Activated naive CD4-positive, alpha-beta T cell treated with anti-CD3 and anti-CD28 coated beads for 36 hours (primary cell): ENCODE measurements at regions of chr5 and their contacts with region 1.

Region 1: GRCh38 chr5:57499262-57500050 is 16.8 kb upstream of the ACTBL2 start:
- DNase-seq: peak; percentile 31
- H3K4me3 Mint-ChIP-seq: peak overlapping the region; percentile 51
- H3K27ac Mint-ChIP-seq: no peak overlapping the region
- H3K4me1 Mint-ChIP-seq: peaks cover 19% of the 10 kb centered on the region
- H3K27me3 Mint-ChIP-seq: no peaks in the 10 kb centered on the region

Region 2: GRCh38 chr5:56909294-56910209 is 589.9 kb before region 1 on chr5 and contains the start of gene SETD9:
- CTCF ChIA-PET with region 1: no interaction called
- intact Hi-C with region 1: loop called (anchors 10 kb)
- DNase-seq: peak; percentile 97
- H3K4me3 Mint-ChIP-seq: peak within 1 kb of the TSS; percentile 81
- H3K27ac Mint-ChIP-seq: peak within 1 kb of the TSS; percentile 94
- H3K4me1 Mint-ChIP-seq: peaks cover 19% of the 10 kb centered on the region
- H3K27me3 Mint-ChIP-seq: no peaks in the 10 kb centered on the region
- total RNA-seq, gene SETD9: 5.8 to 8.6 TPM

Region 3: DNA sequence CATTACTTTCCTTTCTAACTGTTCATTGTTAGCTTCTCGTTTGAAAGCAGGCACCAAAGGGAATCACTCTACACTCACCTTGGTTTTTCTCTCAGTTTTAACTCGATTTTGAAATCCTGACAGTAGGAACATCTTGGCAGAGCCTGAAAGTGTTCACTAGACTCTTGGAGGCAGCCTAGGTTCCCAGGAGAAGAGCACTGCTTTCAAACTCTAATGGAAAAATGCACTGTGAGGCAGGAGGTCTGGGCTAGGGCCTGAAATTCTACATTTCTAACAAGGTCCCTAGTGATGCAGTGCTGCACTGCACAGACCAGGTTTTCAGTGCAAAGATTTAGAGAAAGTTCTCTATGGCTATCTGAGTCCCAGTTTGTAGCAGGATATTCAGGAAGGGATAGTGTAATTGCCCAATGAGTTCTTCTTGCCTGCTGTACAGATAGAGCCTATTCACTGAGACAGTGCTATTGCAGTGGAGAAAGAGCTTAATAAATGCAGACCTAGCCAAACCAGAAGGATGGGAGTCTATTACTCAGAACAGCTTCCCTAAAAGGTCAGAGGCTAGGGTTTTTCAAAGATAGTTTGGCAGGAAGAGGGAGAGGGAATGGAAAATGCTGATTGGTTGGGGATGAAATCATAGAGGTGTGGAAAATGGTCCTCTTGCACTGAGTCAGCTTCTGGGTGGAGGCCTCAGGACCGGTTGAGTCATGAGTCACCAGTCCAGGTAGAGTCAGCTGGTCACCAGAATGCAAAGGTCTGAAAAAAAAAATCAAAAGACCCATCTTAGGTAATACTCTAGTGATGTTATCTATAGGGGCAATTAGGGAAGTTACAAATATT is 171.7 kb before region 1 on chr5:
- CTCF ChIA-PET with region 1: no interaction called
- intact Hi-C with region 1: loop called (anchors 5 kb)
- DNase-seq: peak; percentile 6
- H3K4me3 Mint-ChIP-seq: no peak overlapping the region
- H3K27ac Mint-ChIP-seq: no peak overlapping the region
- H3K4me1 Mint-ChIP-seq: peaks cover 23% of the 10 kb centered on the region
- H3K27me3 Mint-ChIP-seq: no peaks in the 10 kb centered on the region

Region 4: GRCh38 chr5:57338068-57338892 is 161.2 kb before region 1 on chr5:
- CTCF ChIA-PET with region 1: no interaction called
- intact Hi-C with region 1: loop called (anchors 5 kb)
- DNase-seq: peak; percentile 31
- H3K4me3 Mint-ChIP-seq: no peak overlapping the region
- H3K27ac Mint-ChIP-seq: no peak overlapping the region
- H3K4me1 Mint-ChIP-seq: no peaks in the 10 kb centered on the region
- H3K27me3 Mint-ChIP-seq: peaks cover under 1% of the 10 kb centered on the region

Region 5: DNA sequence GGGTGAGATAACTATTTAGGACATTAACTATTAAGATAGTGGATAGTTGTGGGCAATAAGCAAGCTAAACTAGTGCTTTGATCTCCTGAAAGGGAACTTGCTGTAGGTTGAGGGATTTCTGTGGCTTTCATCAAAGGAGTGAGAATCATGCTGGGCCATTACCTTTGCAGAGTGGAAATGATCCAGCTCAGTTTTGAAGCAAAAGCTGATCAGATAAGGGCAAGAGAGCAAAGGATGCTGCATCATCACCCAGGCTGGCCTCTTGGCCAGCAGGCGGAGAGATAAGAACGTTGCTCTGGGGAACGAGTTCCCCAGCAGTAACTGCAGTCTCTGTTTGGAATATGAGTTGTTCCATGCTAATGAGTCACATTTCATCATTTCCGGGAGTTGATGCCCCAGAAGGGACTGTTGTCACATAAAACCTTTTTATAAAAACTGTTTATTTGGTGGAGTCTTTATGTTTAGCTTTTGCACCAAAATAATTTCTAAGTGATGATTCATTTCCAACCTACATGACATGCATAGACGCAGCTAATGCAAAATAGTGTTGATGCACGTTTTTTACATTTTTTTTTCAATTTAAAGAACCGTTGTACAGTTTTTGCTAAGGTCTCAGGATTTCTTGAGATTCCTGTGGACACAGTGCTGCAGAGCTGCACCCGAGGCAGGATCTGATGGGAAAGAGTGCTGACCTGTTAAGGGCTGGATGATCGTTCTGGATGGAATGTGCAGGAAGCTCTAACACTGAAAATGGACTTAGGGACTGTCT is 116.2 kb before region 1 on chr5:
- CTCF ChIA-PET with region 1: no interaction called
- intact Hi-C with region 1: loop called (anchors 1 kb)
- DNase-seq: peak; percentile 55
- H3K4me3 Mint-ChIP-seq: no peak overlapping the region
- H3K27ac Mint-ChIP-seq: peak overlapping the region; percentile 6
- H3K4me1 Mint-ChIP-seq: peaks cover 10% of the 10 kb centered on the region
- H3K27me3 Mint-ChIP-seq: peaks cover 1% of the 10 kb centered on the region

Region 6: GRCh38 chr5:57779383-57780223 is 280.1 kb after region 1 on chr5:
- CTCF ChIA-PET with region 1: interaction called, 3 read pairs
- intact Hi-C with region 1: loop called (anchors 2 kb)
- DNase-seq: peak; percentile 52
- H3K4me3 Mint-ChIP-seq: no peak overlapping the region
- H3K27ac Mint-ChIP-seq: no peak overlapping the region
- H3K4me1 Mint-ChIP-seq: no peaks in the 10 kb centered on the region
- H3K27me3 Mint-ChIP-seq: peaks cover 6% of the 10 kb centered on the region